GM13976 (cell line): ENCODE measurements at regions of chr17 and their contacts with region 1.

Region 1: GRCh38 chr17:21524211-21524591 is 148.0 kb downstream of the KCNJ12 start:
- DNase-seq: no peak
- CTCF ChIP-seq: no peak

Region 2: DNA sequence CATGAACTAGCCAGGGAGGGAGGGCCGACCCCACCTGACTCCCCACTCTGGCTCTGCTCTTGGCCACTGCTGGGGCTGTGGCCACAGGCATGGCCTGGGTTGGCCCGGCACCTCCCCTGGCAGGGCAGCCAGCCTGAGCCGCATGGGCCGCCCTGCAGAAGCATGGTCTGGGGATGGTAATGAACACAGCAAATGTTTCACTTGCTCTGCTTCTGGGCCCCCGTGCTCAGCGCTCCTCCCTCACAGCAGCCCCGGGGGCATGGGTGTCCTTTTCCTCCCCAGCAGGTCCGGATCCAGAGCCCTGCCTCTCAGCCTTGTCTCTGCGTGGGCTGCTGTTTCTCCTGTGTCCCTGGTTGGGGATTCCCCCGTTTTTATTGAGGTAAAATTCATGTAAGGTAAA is 179.0 kb before region 1 on chr17:
- in situ Hi-C with region 1: no loop called
- DNase-seq: no peak
- CTCF ChIP-seq: no peak

Region 3: GRCh38 chr17:21463779-21464407 is 60.3 kb before region 1 on chr17:
- in situ Hi-C with region 1: loop called (anchors 10 kb)
- DNase-seq: no peak
- CTCF ChIP-seq: no peak

Region 4: DNA sequence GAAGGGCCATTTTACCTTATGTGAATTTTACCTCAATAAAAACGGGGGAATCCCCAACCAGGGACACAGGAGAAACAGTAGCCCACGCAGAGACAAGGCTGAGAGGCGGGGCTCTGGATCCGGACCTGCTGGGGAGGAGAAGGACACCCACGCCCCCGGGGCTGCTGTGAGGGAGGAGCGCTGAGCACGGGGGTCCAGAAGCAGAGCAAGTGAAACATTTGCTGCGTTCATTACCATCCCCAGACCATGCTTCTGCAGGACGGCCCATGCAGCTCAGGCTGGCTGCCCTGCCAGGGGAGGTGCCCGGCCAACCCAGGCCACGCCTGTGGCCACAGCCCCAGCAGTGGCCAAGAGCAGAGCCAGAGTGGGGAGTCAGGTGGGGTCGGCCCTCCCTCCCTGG is 218.1 kb after region 1 on chr17:
- in situ Hi-C with region 1: no loop called
- DNase-seq: no peak
- CTCF ChIP-seq: no peak